ENCODE measurements at regions of chr13 and their contacts with region 1.

Region 1: DNA sequence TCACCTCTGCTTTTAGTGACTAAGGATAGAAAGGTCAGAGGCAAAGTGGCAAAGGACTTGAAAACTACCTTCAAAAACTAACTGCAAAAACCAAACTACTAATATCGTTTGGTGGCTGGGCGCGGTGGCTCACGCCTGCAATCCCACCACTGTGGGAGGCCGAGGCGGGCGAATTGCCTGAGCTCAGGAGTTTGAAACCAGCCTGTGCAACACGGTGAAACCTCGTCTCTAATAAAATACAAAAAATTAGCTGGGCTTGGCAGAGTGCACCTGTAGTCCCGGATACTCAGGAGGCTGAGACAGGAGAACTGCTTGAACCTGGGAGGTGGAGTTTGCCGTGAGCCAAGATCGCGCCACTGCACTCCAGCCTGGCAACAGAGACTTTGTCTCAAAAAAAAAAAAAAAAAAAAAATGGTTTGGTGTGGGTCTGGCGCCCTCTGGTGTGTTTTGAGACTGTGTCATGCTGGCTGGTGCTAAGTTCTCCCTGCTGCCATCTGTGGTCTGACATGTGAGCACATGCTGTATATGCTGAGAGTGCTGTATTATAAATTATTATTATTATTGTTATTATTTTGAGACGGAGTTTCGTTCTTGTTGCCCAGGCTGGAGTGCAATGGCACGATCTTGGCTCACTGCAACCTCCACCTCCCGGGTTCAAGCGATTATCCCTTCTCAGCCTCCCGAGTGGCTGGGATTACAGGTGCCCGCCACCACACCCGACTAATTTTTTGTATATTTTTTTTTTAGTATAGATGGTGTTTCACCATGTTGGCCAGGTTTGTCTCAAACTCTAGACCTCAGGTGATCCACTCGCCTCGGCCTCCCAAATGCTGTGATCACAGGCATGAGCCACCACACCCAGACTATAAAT is 36.0 kb upstream of the RNF17 start:
- DNase-seq: peak; percentile 81
- ATAC-seq: peak; percentile 100
- H3K4me3 Mint-ChIP-seq: no peak overlapping the region
- H3K27ac Mint-ChIP-seq: no peak overlapping the region
- H3K4me1 Mint-ChIP-seq: peaks cover 23% of the 10 kb centered on the region
- H3K27me3 Mint-ChIP-seq: peaks cover 26% of the 10 kb centered on the region

Region 2: GRCh38 chr13:24557081-24557480 is 170.9 kb before region 1 on chr13:
- CTCF ChIA-PET with region 1: no interaction called
- POLR2A ChIA-PET with region 1: no interaction called
- DNase-seq: no peak
- ATAC-seq: no peak
- H3K4me3 Mint-ChIP-seq: no peak overlapping the region
- H3K27ac Mint-ChIP-seq: no peak overlapping the region
- H3K4me1 Mint-ChIP-seq: peaks cover 13% of the 10 kb centered on the region
- H3K27me3 Mint-ChIP-seq: peaks cover 35% of the 10 kb centered on the region

Region 3: GRCh38 chr13:24574847-24575246 is 153.1 kb before region 1 on chr13:
- CTCF ChIA-PET with region 1: interaction called, 21 read pairs
- POLR2A ChIA-PET with region 1: no interaction called
- DNase-seq: no peak
- ATAC-seq: no peak
- H3K4me3 Mint-ChIP-seq: no peak overlapping the region
- H3K27ac Mint-ChIP-seq: no peak overlapping the region
- H3K4me1 Mint-ChIP-seq: peaks cover 6% of the 10 kb centered on the region
- H3K27me3 Mint-ChIP-seq: peaks cover 3% of the 10 kb centered on the region

Region 4: DNA sequence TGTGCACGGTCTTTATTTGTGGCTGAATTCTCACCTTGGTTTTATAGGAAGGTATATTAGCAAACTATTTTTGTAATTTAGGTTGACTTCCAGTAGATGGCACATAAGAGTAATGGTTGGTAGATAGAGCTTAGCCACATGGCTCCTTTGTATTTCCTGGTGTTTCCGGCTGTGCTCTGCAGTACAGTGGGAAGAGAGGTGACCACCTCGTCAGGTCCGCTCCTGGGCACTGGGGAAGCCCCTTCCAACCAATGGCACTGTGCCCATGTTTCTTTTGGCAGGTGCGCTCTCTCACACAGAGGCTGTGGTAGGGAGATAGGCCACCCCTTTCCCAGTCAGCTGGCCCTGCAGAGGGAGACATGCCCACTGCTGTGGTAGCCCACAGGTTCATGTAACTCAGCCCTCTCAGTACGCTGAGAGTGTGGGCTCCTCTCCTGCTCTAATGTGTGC is 122.0 kb before region 1 on chr13:
- CTCF ChIA-PET with region 1: interaction called, 15 read pairs
- POLR2A ChIA-PET with region 1: no interaction called
- DNase-seq: no peak
- ATAC-seq: peak; percentile 65
- H3K4me3 Mint-ChIP-seq: no peak overlapping the region
- H3K27ac Mint-ChIP-seq: peak overlapping the region; percentile 41
- H3K4me1 Mint-ChIP-seq: peaks cover 14% of the 10 kb centered on the region
- H3K27me3 Mint-ChIP-seq: no peaks in the 10 kb centered on the region

Region 5: DNA sequence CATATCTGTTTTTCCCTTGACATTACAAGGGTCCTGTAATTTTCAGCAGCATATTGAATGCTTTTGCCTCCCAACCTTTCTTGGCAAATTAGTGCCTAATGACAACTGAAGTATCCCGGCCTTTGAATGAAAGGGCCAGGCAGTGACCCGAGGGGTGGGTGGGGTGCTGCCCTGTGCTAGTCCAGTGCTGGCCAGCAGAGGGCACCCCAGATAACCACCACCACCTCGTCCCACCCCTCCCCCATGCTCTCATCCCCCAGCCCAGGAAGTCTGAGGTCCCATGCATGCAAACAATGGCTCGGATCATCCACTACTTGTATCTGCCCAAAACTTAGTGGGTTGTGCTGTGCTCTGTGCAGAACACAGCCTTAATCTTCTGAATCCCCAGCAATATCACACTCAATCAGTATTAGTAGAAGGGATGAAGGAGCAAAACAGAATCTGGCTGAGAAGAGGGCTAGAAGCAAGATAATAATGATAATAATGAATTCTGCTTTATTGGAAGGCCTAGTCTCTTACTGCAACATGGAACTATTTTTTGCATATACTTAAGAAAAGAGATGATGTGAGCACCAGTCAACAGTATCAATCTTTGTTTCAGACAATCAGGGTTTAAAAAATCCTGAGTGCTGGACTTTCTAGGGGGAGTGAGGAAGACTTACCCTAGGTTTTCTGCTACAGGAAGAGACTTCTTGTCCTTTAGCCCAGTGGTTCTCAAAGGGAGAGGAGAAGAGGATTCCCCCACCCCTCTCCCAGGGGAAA is 43.9 kb before region 1 on chr13:
- CTCF ChIA-PET with region 1: interaction called, 14 read pairs
- POLR2A ChIA-PET with region 1: no interaction called
- DNase-seq: peak; percentile 76
- ATAC-seq: peak; percentile 50
- H3K4me3 Mint-ChIP-seq: no peak overlapping the region
- H3K27ac Mint-ChIP-seq: no peak overlapping the region
- H3K4me1 Mint-ChIP-seq: peaks cover 38% of the 10 kb centered on the region
- H3K27me3 Mint-ChIP-seq: peaks cover 51% of the 10 kb centered on the region

Region 6: DNA sequence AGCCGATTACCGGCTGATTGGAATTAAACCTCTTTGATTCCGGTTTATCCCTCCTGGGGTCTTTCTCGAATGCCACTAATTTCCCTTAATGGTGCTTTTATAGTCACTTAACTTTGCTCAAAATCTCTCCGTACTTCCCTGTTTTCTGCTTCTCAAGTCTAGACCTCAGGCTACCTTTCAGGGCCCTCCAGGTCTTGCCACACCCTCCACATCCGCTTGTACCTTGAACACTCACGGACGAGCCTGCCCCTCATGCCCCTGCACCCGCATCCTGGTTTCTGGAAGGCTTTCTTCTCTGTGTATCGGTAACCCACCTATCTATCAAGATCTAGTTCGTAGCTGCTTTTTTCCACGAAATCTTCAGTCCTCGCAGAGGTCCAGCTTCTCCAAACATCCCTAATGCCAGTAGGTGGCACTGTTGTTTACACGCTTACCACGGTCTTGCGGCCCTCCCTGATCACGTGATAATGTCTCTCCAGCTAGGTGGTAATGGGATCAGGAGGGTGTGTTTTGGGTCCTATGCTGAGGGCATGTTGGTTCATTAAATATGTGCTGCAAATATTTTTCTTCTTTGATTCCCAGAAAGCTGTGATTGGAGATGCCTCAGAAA is 34.0 kb before region 1 on chr13:
- CTCF ChIA-PET with region 1: interaction called, 71 read pairs
- POLR2A ChIA-PET with region 1: interaction called, 5 read pairs
- DNase-seq: peak; percentile 62
- ATAC-seq: peak; percentile 70
- H3K4me3 Mint-ChIP-seq: peak overlapping the region; percentile 15
- H3K27ac Mint-ChIP-seq: no peak overlapping the region
- H3K4me1 Mint-ChIP-seq: peaks cover 19% of the 10 kb centered on the region
- H3K27me3 Mint-ChIP-seq: peaks cover 40% of the 10 kb centered on the region

Region 7: GRCh38 chr13:24700539-24700938 is 27.4 kb before region 1 on chr13:
- CTCF ChIA-PET with region 1: interaction called, 10 read pairs
- POLR2A ChIA-PET with region 1: no interaction called
- DNase-seq: no peak
- ATAC-seq: no peak
- H3K4me3 Mint-ChIP-seq: no peak overlapping the region
- H3K27ac Mint-ChIP-seq: no peak overlapping the region
- H3K4me1 Mint-ChIP-seq: peaks cover 8% of the 10 kb centered on the region
- H3K27me3 Mint-ChIP-seq: peaks cover 40% of the 10 kb centered on the region

Region 8: GRCh38 chr13:24709186-24709913 is 18.6 kb before region 1 on chr13:
- CTCF ChIA-PET with region 1: interaction called, 65 read pairs
- POLR2A ChIA-PET with region 1: no interaction called
- DNase-seq: peak; percentile 86
- ATAC-seq: peak; percentile 97
- H3K4me3 Mint-ChIP-seq: peak overlapping the region; percentile 32
- H3K27ac Mint-ChIP-seq: peak overlapping the region; percentile 85
- H3K4me1 Mint-ChIP-seq: peaks cover 46% of the 10 kb centered on the region
- H3K27me3 Mint-ChIP-seq: peaks cover 10% of the 10 kb centered on the region

Measured in activated CD8-positive, alpha-beta T cell treated with anti-CD3 and anti-CD28 coated beads, Interleukin-2, amount 10 ng/mL, durations not matched to agents 7 days and 5 days (primary cell).